Activated T-helper 2 cell treated with anti-CD3 and anti-CD28 coated beads, Interferon-gamma antibody, Interleukin-2, Interleukin-4, amounts not matched to agents 10 μg/mL and 5 μg/mL and 100 μg/mL, durations not matched to agents 14 hours and 24 hours and 36 hours (primary cell): ENCODE measurements at regions of chr3 and their contacts with region 1.

Region 1: DNA sequence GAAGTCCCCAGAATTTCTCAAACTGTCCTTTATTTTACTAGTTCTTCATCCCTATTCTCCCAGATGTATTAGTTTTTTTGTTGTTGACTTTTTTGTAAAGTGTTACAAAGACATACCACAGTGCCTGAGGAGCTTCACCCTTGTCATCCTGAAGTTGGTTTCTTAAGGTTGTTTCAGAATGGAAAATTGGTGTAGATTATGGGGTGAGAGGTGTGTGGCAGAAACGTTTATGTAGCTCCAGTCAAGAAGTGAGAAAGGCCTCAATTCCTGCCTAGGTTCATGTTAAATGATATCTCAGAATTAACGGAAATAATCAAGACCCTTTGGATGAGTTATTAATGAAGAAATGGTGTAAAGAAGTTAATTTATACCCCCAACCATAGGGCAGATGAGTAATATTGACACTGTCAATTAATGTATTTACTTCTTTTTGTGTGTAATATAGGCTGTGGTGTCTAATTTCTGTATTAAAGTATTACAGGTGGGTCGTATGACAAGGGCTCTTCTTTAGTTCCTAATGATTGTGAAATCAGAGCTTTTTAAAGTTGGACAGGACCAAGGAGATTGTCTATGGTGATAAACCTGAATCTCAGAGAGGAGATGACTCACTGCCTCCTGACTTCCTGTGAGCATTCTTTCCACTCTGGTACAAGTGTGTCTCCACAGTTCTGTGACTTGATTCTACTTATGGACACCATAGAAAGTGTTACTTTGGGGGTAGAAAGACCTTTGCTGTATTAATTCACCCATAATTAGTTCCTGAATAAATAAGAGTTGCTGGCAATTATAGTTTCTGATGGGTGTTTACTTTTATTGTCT is 7.0 kb downstream of the EDEM1 start:
- DNase-seq: peak; percentile 47
- H3K4me3 Mint-ChIP-seq: peak overlapping the region; percentile 62
- H3K27ac Mint-ChIP-seq: peak overlapping the region; percentile 94
- H3K4me1 Mint-ChIP-seq: peaks cover 85% of the 10 kb centered on the region
- H3K27me3 Mint-ChIP-seq: no peaks in the 10 kb centered on the region

Region 2: GRCh38 chr3:4387210-4388204 is 807.0 kb before region 1 on chr3:
- intact Hi-C with region 1: loop called (anchors 5 kb)
- DNase-seq: no peak
- H3K4me3 Mint-ChIP-seq: no peak overlapping the region
- H3K27ac Mint-ChIP-seq: peak overlapping the region; percentile 87
- H3K4me1 Mint-ChIP-seq: peaks cover 45% of the 10 kb centered on the region
- H3K27me3 Mint-ChIP-seq: no peaks in the 10 kb centered on the region

Region 3: DNA sequence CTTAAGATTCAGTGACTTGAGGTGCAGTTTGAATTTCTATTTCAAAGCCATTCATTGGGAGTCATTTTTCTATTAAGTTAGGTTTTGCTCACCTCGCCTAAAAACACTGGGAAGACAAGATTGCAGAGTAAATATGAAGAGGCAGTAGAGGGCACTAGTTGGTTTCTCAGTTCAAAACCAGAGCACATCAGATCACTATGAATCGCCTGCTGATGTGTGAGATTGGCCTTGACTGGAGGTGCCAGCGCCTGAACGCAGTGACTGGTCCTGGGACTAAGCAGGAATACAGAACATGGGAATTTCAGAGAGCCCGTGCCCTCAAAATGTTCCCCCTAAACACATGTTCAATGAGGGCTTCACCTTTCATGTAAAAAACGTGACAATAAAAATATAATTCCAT is 472.4 kb before region 1 on chr3:
- intact Hi-C with region 1: loop called (anchors 10 kb)
- DNase-seq: peak; percentile 23
- H3K4me3 Mint-ChIP-seq: no peak overlapping the region
- H3K27ac Mint-ChIP-seq: peak overlapping the region; percentile 63
- H3K4me1 Mint-ChIP-seq: peaks cover 53% of the 10 kb centered on the region
- H3K27me3 Mint-ChIP-seq: no peaks in the 10 kb centered on the region

Region 4: DNA sequence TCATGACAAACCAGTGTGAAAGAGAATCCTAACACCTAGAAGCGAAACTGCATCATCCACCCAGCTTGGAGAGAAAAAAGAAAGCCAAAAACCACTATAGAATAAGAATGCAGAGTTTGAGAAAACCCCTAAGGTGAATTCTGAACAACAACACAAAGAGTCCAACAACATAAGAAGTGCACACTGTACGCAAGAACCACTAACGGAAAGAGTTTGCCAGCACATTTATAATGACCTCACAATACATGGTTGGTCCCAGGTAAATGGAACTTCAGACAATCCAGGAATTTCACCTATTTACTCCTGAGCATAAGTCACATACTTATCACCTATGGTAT is 343.7 kb before region 1 on chr3:
- intact Hi-C with region 1: loop called (anchors 5 kb)
- DNase-seq: no peak
- H3K4me3 Mint-ChIP-seq: peak overlapping the region; percentile 28
- H3K27ac Mint-ChIP-seq: peak overlapping the region; percentile 97
- H3K4me1 Mint-ChIP-seq: peaks cover 81% of the 10 kb centered on the region
- H3K27me3 Mint-ChIP-seq: no peaks in the 10 kb centered on the region

Region 5: GRCh38 chr3:4943553-4943952 is 251.0 kb before region 1 on chr3:
- intact Hi-C with region 1: no loop called
- DNase-seq: no peak
- H3K4me3 Mint-ChIP-seq: no peak overlapping the region
- H3K27ac Mint-ChIP-seq: no peak overlapping the region
- H3K4me1 Mint-ChIP-seq: no peaks in the 10 kb centered on the region
- H3K27me3 Mint-ChIP-seq: no peaks in the 10 kb centered on the region

Region 6: DNA sequence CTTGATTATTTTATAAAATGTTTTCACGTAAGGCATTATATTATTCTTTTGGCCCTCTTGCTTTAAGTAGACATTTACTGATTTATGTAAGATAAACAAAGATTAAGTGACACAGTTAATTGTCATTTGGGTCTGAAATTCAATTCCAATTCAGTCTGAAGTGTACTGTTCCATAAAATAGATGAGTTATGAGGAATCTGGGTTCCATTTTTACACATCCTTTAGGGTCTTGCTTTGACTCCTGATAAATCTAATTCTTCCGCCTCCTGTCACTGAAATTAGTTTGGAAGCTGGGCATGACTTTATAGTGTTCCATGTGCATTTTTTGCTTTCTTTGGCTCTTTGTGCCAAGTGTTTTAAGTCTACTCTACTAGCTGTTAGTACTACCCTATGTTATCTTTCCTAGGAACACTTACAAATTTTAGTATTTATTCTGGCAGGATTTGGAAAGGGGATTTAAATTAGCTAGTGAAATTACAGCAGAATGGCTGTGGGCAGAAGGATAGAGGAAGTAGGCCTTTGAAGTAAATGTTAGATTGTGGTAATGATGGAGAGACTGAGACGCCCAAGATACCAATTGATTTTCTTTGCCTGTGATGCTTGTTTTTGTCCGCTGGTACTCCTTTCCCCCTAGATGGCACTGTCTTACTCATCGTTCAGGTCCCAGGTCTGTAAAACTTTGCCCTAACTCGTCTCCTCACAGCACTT is 58.2 kb before region 1 on chr3:
- intact Hi-C with region 1: loop called (anchors 2 kb)
- DNase-seq: no peak
- H3K4me3 Mint-ChIP-seq: no peak overlapping the region
- H3K27ac Mint-ChIP-seq: peak overlapping the region; percentile 43
- H3K4me1 Mint-ChIP-seq: peaks cover 35% of the 10 kb centered on the region
- H3K27me3 Mint-ChIP-seq: no peaks in the 10 kb centered on the region